ENCODE measurements at regions of chr12 and their contacts with region 1.

Region 1: DNA sequence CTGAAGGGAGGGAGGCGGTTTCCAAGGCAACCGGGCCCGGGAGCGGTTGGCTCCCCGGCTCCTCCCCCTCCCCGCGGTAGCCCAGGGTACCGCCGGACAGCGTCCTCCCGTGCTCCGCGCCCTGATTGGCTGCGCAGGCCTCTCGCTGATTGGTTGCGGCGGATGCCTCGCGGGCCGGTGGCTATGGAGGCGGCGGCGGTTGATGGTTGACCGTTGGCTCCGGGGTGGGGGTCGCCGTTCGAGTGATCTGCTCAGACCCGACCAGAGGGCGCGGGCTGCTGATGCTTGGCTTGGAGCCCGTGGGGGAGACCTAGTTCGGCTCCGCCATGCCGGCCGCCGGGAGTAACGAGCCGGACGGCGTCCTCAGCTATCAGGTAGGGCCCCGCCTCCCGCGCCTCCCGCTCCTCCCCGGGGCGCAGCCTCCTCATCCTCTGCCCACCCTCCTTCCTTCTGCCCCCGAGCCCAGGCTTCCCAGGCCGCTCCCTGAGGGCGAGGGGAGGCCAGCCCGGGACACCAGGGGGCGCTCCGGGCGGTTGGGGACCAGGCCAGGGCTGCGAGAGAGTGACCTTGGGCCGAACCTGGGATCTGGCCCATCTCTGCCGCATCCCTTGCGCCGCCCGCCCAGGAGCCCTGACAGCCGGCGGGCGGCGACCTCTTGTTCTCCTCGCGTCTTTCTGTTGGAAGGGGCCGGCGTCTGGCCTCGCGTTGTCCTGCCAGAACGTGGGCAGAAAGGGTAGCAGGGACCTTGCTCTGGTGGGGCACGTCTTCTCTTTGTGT is at the start of gene SLC4A8:
- DNase-seq: peak; percentile 84 to 85
- ATAC-seq: peak; percentile 93 to 96 (median 94)
- H3K4me3 ChIP-seq: peak within 1 kb of the TSS; percentile 34 to 66 (median 57)
- H3K27ac ChIP-seq: peak within 1 kb of the TSS in 2 of 10 donors; percentile 2 to 27
- H3K4me1 ChIP-seq: peaks cover 0 to 13% (median 10%) of the 10 kb centered on the region in 9 donors
- H3K27me3 ChIP-seq: peaks cover 0 to 36% (median 5%) of the 10 kb centered on the region in 7 donors
- CTCF ChIP-seq: peak; percentile 31 to 83 (median 79)
- total RNA-seq, gene SLC4A8: 0.28 to 1.8 (median 0.63) TPM

Region 2: DNA sequence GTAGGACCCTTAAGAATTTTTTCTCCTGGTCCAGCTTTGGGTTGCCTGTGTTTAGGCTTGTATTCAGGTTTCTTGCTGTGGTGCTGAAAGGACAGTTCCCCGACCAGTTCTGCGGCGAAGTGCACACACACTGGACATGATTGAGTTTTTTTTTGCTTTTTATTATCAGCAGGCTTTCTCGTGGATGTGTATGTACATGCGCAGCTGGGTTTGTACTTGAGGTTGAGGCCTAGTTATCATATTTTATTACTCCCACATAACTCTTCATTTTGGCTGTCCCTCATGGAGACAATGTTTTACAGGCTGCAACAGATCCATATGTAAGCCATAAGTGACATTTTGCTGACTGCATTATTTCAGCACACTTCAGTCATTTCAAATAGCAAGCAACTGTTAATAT is 168.7 kb after region 1 on chr12:
- intact Hi-C with region 1: no loop called
- DNase-seq: peak in 1 of 2 donors; percentile 37
- ATAC-seq: no peak
- H3K4me3 ChIP-seq: no peak overlapping the region
- H3K27ac ChIP-seq: no peak overlapping the region
- H3K4me1 ChIP-seq: peaks cover 0 to 12% (median 10%) of the 10 kb centered on the region in 9 donors
- H3K27me3 ChIP-seq: peaks cover 0 to 77% (median 25%) of the 10 kb centered on the region in 7 donors
- CTCF ChIP-seq: no peak

Region 3: GRCh38 chr12:51814311-51815088 is 389.6 kb after region 1 on chr12:
- intact Hi-C with region 1: loop called in 5 of 10 experiments (anchors 5 kb)
- DNase-seq: peak; percentile 73 to 88
- ATAC-seq: peak; percentile 77 to 94 (median 86)
- H3K4me3 ChIP-seq: peak overlapping the region; percentile 27 to 72 (median 66)
- H3K27ac ChIP-seq: peak overlapping the region; percentile 59 to 92 (median 88)
- H3K4me1 ChIP-seq: peaks cover 0 to 25% (median 3%) of the 10 kb centered on the region in 9 donors
- H3K27me3 ChIP-seq: peaks cover 0 to 37% (median 12%) of the 10 kb centered on the region in 7 donors
- CTCF ChIP-seq: peak; percentile 40 to 80 (median 58)

Region 4: GRCh38 chr12:51863933-51864832 is 439.3 kb after region 1 on chr12:
- intact Hi-C with region 1: loop called in 1 of 10 experiments (anchors 5 kb)
- DNase-seq: no peak
- ATAC-seq: peak in 7 of 8 donors; percentile 22 to 64 (median 48)
- H3K4me3 ChIP-seq: peak overlapping the region in 9 of 10 donors; percentile 34 to 56 (median 49)
- H3K27ac ChIP-seq: no peak overlapping the region
- H3K4me1 ChIP-seq: peaks cover 1 to 27% (median 19%) of the 10 kb centered on the region in 9 donors
- H3K27me3 ChIP-seq: peaks cover 0 to 67% (median 40%) of the 10 kb centered on the region in 7 donors
- CTCF ChIP-seq: no peak

Region 5: DNA sequence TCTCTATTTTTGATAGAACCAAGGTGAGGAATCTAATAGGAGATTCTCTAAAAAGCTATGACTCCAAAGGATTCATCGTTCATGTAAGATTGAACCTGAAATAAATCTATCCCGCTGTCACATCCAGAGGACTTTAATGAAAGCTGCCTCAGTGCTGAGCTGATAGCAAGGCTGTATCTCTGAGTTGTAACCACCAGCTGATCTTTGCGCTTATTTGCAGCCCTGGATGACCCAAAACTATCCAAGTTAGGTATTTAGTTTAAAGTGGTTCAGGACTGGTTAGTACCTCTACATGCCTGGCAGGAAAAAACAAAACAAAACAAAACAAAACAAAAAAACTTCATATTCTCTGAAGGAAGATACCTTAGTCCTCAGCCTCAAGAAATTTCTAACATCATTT is 454.3 kb after region 1 on chr12:
- intact Hi-C with region 1: loop called in 7 of 10 experiments (anchors 2 to 5 kb)
- DNase-seq: no peak
- ATAC-seq: no peak
- H3K4me3 ChIP-seq: no peak overlapping the region
- H3K27ac ChIP-seq: no peak overlapping the region
- H3K4me1 ChIP-seq: no peaks in the 10 kb centered on the region
- H3K27me3 ChIP-seq: no peaks in the 10 kb centered on the region
- CTCF ChIP-seq: no peak

Region 6: DNA sequence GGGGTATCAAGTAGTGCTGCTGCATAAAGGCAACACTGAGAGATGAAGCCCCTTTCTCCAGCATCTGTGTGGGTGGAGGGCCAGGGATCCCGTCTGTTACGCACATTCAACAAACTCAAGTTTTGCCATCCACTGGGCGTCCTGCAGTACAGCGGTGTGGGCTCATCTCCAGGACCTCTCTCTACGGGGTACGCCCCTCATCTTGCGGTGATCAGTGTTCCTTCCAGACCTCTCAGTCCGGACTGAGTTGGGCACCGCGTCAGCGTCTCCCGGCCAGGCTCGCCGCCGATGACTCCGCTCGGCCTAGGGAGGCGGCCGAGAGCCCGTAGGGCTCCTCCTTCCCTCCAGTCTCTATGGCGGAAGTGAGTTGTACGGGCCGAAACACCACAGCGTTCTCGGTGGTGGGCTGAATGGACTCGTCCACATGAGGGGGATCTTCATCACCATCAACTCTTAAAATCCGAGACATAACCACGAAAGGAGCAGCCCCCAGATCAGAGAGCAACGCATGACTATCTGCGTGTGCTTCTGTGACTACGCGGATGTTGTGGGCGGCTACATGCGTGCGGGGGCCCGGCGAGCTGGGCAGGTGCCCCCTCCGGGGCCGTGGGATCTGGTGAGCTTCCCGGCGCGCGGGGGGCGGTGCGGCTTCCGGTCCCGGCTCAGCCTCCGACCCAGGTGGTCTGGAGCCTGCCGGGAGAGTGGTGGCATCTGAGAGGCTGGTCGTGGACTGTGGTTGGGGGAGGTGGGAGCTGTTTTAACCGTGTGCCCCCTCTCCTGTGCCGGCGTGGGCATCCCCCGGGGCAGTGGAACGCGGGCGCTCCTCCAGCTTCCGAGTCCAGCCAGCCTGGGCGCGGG is 644.7 kb after region 1 on chr12 and contains the start of gene ATG101:
- intact Hi-C with region 1: loop called in 1 of 10 experiments (anchors 10 kb)
- DNase-seq: peak; percentile 88 to 93
- ATAC-seq: peak; percentile 96 to 98 (median 97)
- H3K4me3 ChIP-seq: peak within 1 kb of the TSS; percentile 68 to 98 (median 82)
- H3K27ac ChIP-seq: peak within 1 kb of the TSS; percentile 64 to 96 (median 93)
- H3K4me1 ChIP-seq: peaks cover 12 to 54% (median 33%) of the 10 kb centered on the region in 9 donors
- H3K27me3 ChIP-seq: no peaks in the 10 kb centered on the region
- CTCF ChIP-seq: peak; percentile 49 to 87 (median 67)
- total RNA-seq, gene ATG101: 17.5 to 31.8 (median 22.2) TPM